HEK293T (cell line): ENCODE measurements at regions of chrX and their contacts with region 1.

Region 1: GRCh38 chrX:134711135-134711921 is 53.1 kb upstream of the PLAC1 start:
- DNase-seq: no peak

Region 2: GRCh38 chrX:134603806-134604700 is 107.3 kb before region 1 on chrX:
- CTCF ChIA-PET with region 1: no interaction called
- POLR2A ChIA-PET with region 1: interaction called, 10 read pairs
- DNase-seq: no peak

Region 3: DNA sequence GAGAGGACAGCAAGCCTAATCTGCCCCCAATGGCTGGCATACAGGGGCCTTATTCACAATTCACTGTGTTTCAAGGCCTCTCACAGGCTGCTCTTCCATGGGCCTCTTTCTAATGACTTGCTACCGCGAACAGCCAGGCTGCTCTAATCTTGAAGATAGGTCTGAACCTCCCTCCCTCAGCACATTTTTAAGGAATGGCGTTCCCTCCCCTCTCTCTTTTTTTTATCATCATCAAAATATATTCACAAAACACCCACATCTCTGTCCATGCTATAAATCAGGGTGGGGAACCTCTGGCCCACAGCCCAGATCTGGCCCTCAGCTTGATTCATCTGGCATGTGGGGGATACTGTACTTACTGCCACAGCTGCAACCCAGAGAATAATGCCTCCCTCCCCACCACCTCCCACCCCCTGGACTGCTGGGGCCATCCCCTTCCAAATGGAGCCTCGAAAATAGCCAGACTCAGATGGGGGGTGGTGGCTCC is 23.2 kb after region 1 on chrX:
- CTCF ChIA-PET with region 1: interaction called, 3 read pairs
- POLR2A ChIA-PET with region 1: interaction called, 45 read pairs
- DNase-seq: no peak